OCI-LY7 (cell line): ENCODE measurements at regions of chr6 and their contacts with region 1.

Region 1: GRCh38 chr6:88975369-88975768 is 12.0 kb upstream of the RNGTT start:
- DNase-seq: peak; percentile 13
- H3K4me3 ChIP-seq: no peak overlapping the region
- H3K27ac ChIP-seq: no peak overlapping the region
- H3K4me1 ChIP-seq: no peaks in the 10 kb centered on the region
- CTCF ChIP-seq: peak; percentile 66

Region 2: DNA sequence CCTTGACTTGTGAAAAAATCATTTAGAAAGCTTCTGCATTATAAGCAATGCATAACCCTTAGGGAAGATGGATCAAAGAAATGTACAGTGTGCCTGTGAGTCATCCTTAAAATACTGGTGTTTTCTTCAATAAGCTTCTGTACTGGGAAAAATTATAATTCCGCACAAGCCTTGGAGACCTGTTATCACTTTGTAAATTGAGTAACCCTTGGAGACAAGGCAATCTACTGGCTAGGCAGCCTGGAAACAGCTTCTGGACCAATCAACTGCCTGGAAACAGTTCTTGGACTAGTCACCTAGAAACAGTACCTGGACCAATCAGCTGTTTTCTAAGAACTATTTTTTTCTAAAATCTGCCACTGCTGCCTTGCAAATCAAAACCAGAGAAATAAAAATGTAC is 13.8 kb after region 1 on chr6:
- CTCF ChIA-PET with region 1: no interaction called
- POLR2A ChIA-PET with region 1: no interaction called
- intact Hi-C with region 1: no loop called
- DNase-seq: no peak
- H3K4me3 ChIP-seq: no peak overlapping the region
- H3K27ac ChIP-seq: no peak overlapping the region
- H3K4me1 ChIP-seq: no peaks in the 10 kb centered on the region
- CTCF ChIP-seq: no peak

Region 3: DNA sequence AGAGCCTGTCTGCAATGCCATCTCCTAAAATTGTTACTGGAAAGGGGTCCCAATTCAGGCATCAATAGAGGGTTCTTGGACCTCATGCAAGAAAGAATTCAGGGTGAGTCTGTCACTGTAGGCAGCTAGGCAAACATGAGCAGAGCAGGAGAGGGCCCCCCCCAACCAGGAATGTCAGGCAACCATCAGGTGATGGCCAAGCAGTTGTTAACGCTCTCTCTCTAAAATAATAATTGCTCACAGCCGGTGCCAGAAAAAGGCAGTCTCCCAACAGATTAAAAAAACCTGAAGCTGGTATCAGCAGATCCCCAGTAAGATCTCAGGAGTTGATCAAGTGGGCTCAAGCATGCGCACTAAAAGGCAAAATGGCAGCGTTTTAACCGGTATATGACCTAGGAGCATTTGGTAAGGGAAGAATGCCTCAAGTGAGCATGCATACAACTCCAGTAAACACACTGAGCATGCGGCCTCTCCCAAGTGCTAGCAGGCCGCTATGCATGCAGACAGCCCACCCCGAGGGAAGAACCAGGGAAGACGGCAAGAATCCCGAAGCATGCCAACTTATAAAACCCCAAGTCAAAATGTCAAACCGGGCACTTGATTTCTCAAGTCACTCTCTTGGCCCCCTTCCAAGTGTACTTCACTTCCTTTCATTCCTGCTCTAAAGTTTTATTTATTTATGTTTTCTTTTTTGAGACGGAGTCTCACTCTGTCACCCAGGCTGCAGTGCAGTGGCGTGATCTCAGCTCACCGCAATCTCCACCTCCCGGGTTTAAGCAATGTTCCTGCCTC is 32.0 kb after region 1 on chr6:
- CTCF ChIA-PET with region 1: no interaction called
- POLR2A ChIA-PET with region 1: no interaction called
- intact Hi-C with region 1: no loop called
- DNase-seq: no peak
- H3K4me3 ChIP-seq: no peak overlapping the region
- H3K27ac ChIP-seq: no peak overlapping the region
- H3K4me1 ChIP-seq: no peaks in the 10 kb centered on the region
- CTCF ChIP-seq: no peak

Region 4: DNA sequence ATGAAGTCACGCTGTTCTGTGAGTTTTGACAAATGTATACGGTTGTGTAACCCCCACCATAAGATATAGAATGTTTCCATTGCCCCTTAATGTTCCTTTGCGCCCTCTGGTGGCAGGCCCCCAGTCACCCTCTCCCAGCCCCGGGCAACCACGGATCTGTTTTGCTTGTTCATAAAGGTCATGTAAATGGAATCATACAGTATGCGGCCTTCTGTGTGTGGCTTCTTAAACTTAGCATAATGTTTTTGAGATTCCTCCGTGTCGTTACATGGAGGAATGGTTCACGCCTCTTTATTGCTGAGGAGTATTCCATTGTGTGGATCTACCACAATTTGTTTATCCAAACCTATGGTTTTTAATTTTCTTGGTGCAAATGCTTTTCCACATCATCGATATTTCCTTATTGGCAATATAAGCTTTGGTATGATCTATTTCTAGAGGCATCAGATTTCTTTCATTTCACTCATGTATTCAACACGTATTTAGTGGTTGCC is 634.8 kb after region 1 on chr6:
- CTCF ChIA-PET with region 1: no interaction called
- POLR2A ChIA-PET with region 1: no interaction called
- intact Hi-C with region 1: loop called (anchors 10 kb)
- DNase-seq: peak; percentile 72
- H3K4me3 ChIP-seq: no peak overlapping the region
- H3K27ac ChIP-seq: no peak overlapping the region
- H3K4me1 ChIP-seq: peaks cover 26% of the 10 kb centered on the region
- CTCF ChIP-seq: peak; percentile 99